HepG2 (cell line): ENCODE measurements at regions of chr6 and their contacts with region 1.

Region 1: GRCh38 chr6:41787219-41787917 is at the start of gene TOMM6:
- DNase-seq: peak; percentile 92
- ATAC-seq: peak; percentile 89
- H3K4me3 ChIP-seq: peak within 1 kb of the TSS; percentile 65 to 99 (median 99)
- H3K27ac ChIP-seq: peak within 1 kb of the TSS; percentile 94
- H3K4me1 ChIP-seq: peaks cover 27% of the 10 kb centered on the region
- H3K27me3 ChIP-seq: no peaks in the 10 kb centered on the region; a peak in 2 of 5 replicates
- CTCF ChIP-seq: peak; percentile 92
- EP300 ChIP-seq: no peak; a peak in 1 of 4 replicates
- POLR2A ChIP-seq: peak in 1 of 2 experiments; percentile 98; a peak in 2 of 4 replicates
- RAD21 ChIP-seq: 0 out of 2 replicates have a peak, but pooled peaks have one; percentile 29
- total RNA-seq, gene TOMM6: 321 and 480 TPM in 2 replicates

Region 2: DNA sequence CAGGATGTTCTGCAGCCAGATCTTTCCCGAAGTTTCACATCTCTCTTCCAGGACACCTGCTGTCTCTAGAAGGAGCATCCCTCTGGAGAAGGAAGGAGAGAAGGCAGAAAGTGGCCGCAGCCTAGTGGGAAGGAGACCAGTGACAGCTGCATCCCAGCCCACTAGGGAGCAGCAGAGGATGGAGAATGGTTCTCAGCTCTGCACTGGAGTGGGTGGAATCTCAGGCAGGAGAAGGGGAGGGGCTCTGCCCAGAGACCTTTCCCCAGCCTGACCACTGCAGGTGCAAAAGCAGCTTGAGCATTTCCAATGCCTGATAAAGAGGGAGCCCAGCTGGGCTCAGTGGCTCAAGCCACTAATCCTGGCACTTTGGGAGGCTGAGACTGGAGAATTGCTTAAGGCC is 419.7 kb before region 1 on chr6:
- CTCF ChIA-PET with region 1: interaction called, 5 read pairs
- POLR2A ChIA-PET with region 1: no interaction called
- in situ Hi-C with region 1: loop called (anchors 5 kb)
- intact Hi-C with region 1: loop called (anchors 5 kb)
- DNase-seq: peak; percentile 78
- ATAC-seq: peak; percentile 94
- H3K4me3 ChIP-seq: no peak overlapping the region
- H3K27ac ChIP-seq: no peak overlapping the region
- H3K4me1 ChIP-seq: peaks cover 8% of the 10 kb centered on the region
- H3K27me3 ChIP-seq: peaks cover 0 to 15% of the 10 kb centered on the region in 2 experiments; a peak in 4 of 5 replicates
- CTCF ChIP-seq: peak; percentile 98
- EP300 ChIP-seq: no peak
- POLR2A ChIP-seq: no peak
- RAD21 ChIP-seq: peak; percentile 94

Region 3: DNA sequence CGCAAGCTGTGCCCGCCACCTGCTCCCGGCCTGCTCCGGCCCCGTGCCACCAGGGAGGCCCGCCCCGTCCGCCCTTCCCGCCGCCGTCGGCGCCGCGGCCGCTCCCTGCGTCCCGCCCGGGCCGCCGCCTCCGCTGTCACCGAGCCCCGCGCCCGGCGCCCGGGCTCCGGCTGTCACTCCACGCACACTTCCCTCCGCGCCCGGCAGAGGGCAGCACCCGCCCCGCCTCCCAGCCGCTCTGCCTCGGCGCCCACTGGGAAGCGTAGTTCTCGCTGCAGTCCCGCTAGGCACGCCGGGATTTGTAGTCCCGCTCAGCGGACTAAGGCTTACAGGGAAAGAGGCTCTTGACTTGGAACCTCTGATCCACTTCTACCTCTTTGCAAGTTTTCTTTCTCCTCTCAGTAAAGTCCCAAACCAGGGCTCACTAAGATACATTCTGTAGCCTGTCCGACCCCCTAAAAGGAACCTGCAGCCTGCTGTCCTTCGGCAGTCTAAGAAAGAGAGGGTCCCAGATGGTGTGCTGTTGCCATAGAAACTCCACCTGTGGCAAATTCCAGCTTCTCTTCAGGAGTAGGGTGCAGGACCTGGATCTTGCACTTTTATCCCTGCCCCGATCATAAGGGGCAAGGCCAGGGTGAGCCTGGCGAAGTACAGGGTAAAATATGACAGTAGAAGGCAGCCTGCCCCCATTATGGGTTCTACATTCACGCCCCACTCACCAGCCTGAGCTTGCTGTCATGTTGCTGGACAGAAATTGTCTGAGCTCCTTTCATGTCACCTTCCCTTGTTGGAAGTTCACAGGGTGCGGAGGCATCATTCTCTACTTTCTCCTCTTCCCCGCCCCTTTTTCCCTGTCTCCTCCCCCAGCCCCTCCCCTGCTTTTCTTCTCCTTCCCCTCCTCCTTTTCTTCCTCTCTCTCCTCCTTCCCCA is 51.7 kb before region 1 on chr6 and contains the start of gene TFEB:
- CTCF ChIA-PET with region 1: interaction called, 5 read pairs
- POLR2A ChIA-PET with region 1: interaction called, 60 read pairs
- in situ Hi-C with region 1: no loop called
- intact Hi-C with region 1: no loop called
- DNase-seq: peak; percentile 90
- ATAC-seq: peak; percentile 60
- H3K4me3 ChIP-seq: peak within 1 kb of the TSS; percentile 51 to 83 (median 76)
- H3K27ac ChIP-seq: peak within 1 kb of the TSS; percentile 57
- H3K4me1 ChIP-seq: peaks cover 65% of the 10 kb centered on the region
- H3K27me3 ChIP-seq: no peaks in the 10 kb centered on the region; a peak in 1 of 5 replicates
- CTCF ChIP-seq: peak; percentile 94
- EP300 ChIP-seq: peak in 1 of 2 experiments; percentile 57; a peak in 2 of 4 replicates
- POLR2A ChIP-seq: no peak
- RAD21 ChIP-seq: peak; percentile 99
- total RNA-seq, gene TFEB: 12.8 and 13.3 TPM in 2 replicates

Region 4: GRCh38 chr6:41747256-41748101 is 39.9 kb before region 1 on chr6 and contains the start of gene PGC:
- CTCF ChIA-PET with region 1: no interaction called
- POLR2A ChIA-PET with region 1: interaction called, 22 read pairs
- in situ Hi-C with region 1: no loop called
- intact Hi-C with region 1: no loop called
- DNase-seq: peak; percentile 99
- ATAC-seq: peak; percentile 89
- H3K4me3 ChIP-seq: peak within 1 kb of the TSS; percentile 16 to 60 (median 38); a peak in 5 of 6 replicates
- H3K27ac ChIP-seq: peak within 1 kb of the TSS; percentile 91
- H3K4me1 ChIP-seq: peaks cover 83% of the 10 kb centered on the region
- H3K27me3 ChIP-seq: no peaks in the 10 kb centered on the region
- CTCF ChIP-seq: peak; percentile 16; the same call in 1 of the 2 replicates
- EP300 ChIP-seq: peak; percentile 94; a peak in 3 of 4 replicates
- POLR2A ChIP-seq: peak; percentile 70 to 73; a peak in 3 of 4 replicates
- RAD21 ChIP-seq: no peak; the same call in 1 of the 2 replicates
- total RNA-seq, gene PGC: 225 and 502 TPM in 2 replicates

Region 5: DNA sequence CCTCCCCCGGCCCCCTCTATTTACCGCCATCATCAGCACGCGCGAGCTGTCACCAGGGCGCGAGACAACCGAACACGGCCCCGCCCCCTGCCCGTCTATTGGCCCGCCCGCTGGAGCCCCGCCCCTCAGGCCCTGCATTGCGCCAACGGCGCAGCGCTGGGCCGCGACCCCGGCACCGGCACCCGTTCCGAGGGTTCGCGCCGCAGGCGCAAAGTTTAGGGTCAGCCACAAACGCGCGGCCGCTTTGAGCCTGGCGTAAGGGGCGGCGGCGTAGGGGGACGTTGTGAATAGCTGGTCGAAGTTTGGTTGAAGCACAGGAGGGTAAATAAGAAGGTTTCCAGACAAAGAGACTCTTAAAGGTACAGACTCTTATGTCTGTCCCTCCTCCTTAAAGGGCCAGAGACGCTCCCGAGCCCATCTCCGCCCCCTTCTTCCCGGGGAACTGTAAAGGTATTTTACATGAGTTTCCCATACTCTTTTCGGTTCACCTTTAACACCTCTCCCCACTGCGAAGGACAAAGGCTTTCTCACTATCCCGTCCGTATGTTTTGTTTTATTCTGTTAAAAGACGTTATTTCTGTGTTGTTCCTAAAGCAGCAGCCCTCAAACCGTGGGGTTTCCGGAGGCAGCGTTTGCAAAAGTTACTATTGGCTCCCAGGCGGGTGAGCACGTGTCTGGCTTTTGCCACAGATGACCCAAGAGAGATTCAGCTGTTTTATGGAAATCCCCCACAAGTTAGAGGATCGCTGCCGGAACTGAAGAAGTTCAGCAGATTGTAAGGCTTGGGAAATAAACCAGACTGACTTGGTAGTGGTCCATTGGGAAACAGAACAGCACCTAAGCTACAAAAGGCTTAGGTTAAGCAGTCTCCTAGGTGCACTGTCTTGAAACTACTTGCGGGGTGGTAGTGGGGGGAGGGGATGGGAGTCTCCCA is 108.2 kb after region 1 on chr6 and contains the start of gene USP49:
- CTCF ChIA-PET with region 1: no interaction called
- POLR2A ChIA-PET with region 1: interaction called, 21 read pairs
- in situ Hi-C with region 1: no loop called
- intact Hi-C with region 1: no loop called
- DNase-seq: peak; percentile 78
- ATAC-seq: peak; percentile 94
- H3K4me3 ChIP-seq: peak within 1 kb of the TSS; percentile 79 to 81 (median 79)
- H3K27ac ChIP-seq: peak within 1 kb of the TSS; percentile 57
- H3K4me1 ChIP-seq: peaks cover 30% of the 10 kb centered on the region
- H3K27me3 ChIP-seq: no peaks in the 10 kb centered on the region; a peak in 1 of 5 replicates
- CTCF ChIP-seq: no peak
- EP300 ChIP-seq: no peak
- POLR2A ChIP-seq: no peak
- RAD21 ChIP-seq: no peak
- total RNA-seq, gene USP49: 2.9 TPM in 2 replicates

Region 6: GRCh38 chr6:42043787-42044475 is 256.6 kb after region 1 on chr6:
- CTCF ChIA-PET with region 1: interaction called, 17 read pairs
- POLR2A ChIA-PET with region 1: interaction called, 46 read pairs
- in situ Hi-C with region 1: loop called (anchors 5 kb)
- intact Hi-C with region 1: loop called (anchors 1 kb)
- DNase-seq: peak; percentile 88
- ATAC-seq: peak; percentile 88
- H3K4me3 ChIP-seq: peak overlapping the region; percentile 50 to 76 (median 53)
- H3K27ac ChIP-seq: no peak overlapping the region
- H3K4me1 ChIP-seq: peaks cover 49% of the 10 kb centered on the region
- H3K27me3 ChIP-seq: no peaks in the 10 kb centered on the region; a peak in 2 of 5 replicates
- CTCF ChIP-seq: peak; percentile 99
- EP300 ChIP-seq: no peak
- POLR2A ChIP-seq: no peak
- RAD21 ChIP-seq: peak; percentile 98

Region 7: DNA sequence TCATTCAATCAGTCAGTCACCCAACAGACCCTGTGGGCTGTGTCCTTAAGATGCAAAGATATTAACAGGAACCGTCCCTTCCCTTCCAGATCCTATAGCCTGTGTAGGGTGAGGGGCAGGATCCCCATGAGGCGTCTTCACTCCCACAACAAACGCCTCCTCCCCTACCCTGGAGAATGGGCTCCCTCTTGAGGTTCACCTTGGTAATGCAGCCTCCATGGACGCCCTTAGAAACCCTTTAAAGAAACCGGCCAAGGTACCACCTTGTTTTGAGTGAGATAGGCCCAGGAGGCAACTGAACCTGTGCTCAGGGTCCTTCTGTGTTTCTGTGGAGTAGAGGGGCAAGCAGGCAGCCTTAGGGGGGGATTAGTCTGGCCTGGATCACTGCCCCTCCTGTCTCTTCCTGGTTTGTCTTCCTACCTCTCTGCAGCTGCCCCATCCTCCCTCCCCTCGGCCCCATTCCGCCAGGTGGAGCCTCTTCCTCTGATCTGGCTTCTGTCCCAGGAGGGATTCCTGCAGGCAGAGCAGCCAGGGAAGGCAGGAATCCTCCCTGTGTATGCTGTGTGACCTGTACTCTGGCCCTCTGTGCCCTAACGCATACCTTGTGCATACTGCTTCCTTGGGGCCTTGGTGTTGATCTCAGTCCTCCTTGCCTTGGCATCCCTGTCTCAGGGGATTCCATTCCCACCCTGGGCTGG is 379.2 kb after region 1 on chr6:
- CTCF ChIA-PET with region 1: no interaction called
- POLR2A ChIA-PET with region 1: interaction called, 3 read pairs
- in situ Hi-C with region 1: no loop called
- intact Hi-C with region 1: loop called (anchors 5 kb)
- DNase-seq: peak; percentile 80
- ATAC-seq: peak; percentile 89
- H3K4me3 ChIP-seq: peak overlapping the region in 1 of 3 experiments; percentile 26; a peak in 1 of 6 replicates
- H3K27ac ChIP-seq: no peak overlapping the region
- H3K4me1 ChIP-seq: peaks cover 36% of the 10 kb centered on the region
- H3K27me3 ChIP-seq: peaks cover 0 to 2% of the 10 kb centered on the region in 2 experiments; a peak in 3 of 5 replicates
- CTCF ChIP-seq: peak; percentile 93
- EP300 ChIP-seq: no peak
- POLR2A ChIP-seq: no peak
- RAD21 ChIP-seq: peak; percentile 96